IMR-90 (cell line): ENCODE measurements at regions of chr5 and their contacts with region 1.

Region 1: GRCh38 chr5:112570708-112571444 is 151.8 kb upstream of the EPB41L4A start:
- DNase-seq: no peak
- ATAC-seq: no peak
- H3K4me3 ChIP-seq: no peak overlapping the region
- H3K27ac ChIP-seq: no peak overlapping the region
- H3K4me1 ChIP-seq: no peaks in the 10 kb centered on the region
- H3K27me3 ChIP-seq: no peaks in the 10 kb centered on the region; the same call in 1 of the 2 replicates
- CTCF ChIP-seq: no peak
- POLR2A ChIP-seq: no peak
- RAD21 ChIP-seq: no peak

Region 2: DNA sequence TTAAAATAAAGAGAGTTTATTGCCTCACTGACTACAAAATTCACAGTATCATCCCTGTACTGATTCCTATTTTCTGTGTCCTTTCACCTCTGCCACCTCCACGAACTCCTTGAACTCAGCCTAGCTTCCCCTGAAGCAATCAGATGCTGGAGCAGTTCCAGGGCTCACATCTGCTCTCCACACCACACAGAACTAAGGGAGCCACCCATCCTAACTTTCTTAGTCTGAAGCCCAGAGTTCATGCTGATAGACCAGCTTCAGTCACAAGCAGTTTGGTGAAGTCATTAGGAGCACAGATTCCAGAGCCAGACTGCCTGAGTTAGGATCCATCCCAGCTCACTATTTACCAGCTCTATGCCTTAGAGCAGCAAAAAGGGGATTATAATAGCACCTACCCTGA is 136.2 kb before region 1 on chr5:
- CTCF ChIA-PET with region 1: no interaction called
- POLR2A ChIA-PET with region 1: interaction called, 13 read pairs
- dilution Hi-C with region 1: no loop called
- in situ Hi-C with region 1: no loop called
- intact Hi-C with region 1: no loop called
- DNase-seq: no peak
- ATAC-seq: no peak
- H3K4me3 ChIP-seq: no peak overlapping the region
- H3K27ac ChIP-seq: no peak overlapping the region
- H3K4me1 ChIP-seq: no peaks in the 10 kb centered on the region
- H3K27me3 ChIP-seq: no peaks in the 10 kb centered on the region
- CTCF ChIP-seq: no peak
- POLR2A ChIP-seq: no peak
- RAD21 ChIP-seq: no peak